ENCODE measurements at regions of chr20 and their contacts with region 1.

Region 1: GRCh38 chr20:36493013-36493800 is 48.1 kb upstream of the MYL9 start:
- DNase-seq: peak; percentile 12
- ATAC-seq: peak; percentile 45
- H3K4me3 ChIP-seq: no peak overlapping the region
- H3K27ac ChIP-seq: no peak overlapping the region
- H3K4me1 ChIP-seq: no peaks in the 10 kb centered on the region
- H3K27me3 ChIP-seq: no peaks in the 10 kb centered on the region
- CTCF ChIP-seq: peak; percentile 45

Region 2: GRCh38 chr20:36460648-36461599 is 32.3 kb before region 1 on chr20:
- CTCF ChIA-PET with region 1: no interaction called
- POLR2A ChIA-PET with region 1: interaction called, 11 read pairs
- intact Hi-C with region 1: no loop called
- DNase-seq: peak; percentile 93
- ATAC-seq: peak; percentile 62
- H3K4me3 ChIP-seq: peak overlapping the region; percentile 33; the same call in 1 of the 2 replicates
- H3K27ac ChIP-seq: peak overlapping the region; percentile 27
- H3K4me1 ChIP-seq: peaks cover 36% of the 10 kb centered on the region
- H3K27me3 ChIP-seq: no peaks in the 10 kb centered on the region
- CTCF ChIP-seq: no peak